BJ (cell line): ENCODE measurements at regions of chr12 and their contacts with region 1.

Region 1: GRCh38 chr12:48988030-48988649 is 10.0 kb downstream of the WNT1 start:
- DNase-seq: no peak
- H3K4me3 ChIP-seq: no peak overlapping the region
- H3K27me3 ChIP-seq: peaks cover 37% of the 10 kb centered on the region
- CTCF ChIP-seq: peak; percentile 90

Region 2: GRCh38 chr12:48739618-48740273 is 248.4 kb before region 1 on chr12:
- CTCF ChIA-PET with region 1: no interaction called
- POLR2A ChIA-PET with region 1: no interaction called
- DNase-seq: no peak
- H3K4me3 ChIP-seq: no peak overlapping the region
- H3K27me3 ChIP-seq: no peaks in the 10 kb centered on the region
- CTCF ChIP-seq: no peak

Region 3: DNA sequence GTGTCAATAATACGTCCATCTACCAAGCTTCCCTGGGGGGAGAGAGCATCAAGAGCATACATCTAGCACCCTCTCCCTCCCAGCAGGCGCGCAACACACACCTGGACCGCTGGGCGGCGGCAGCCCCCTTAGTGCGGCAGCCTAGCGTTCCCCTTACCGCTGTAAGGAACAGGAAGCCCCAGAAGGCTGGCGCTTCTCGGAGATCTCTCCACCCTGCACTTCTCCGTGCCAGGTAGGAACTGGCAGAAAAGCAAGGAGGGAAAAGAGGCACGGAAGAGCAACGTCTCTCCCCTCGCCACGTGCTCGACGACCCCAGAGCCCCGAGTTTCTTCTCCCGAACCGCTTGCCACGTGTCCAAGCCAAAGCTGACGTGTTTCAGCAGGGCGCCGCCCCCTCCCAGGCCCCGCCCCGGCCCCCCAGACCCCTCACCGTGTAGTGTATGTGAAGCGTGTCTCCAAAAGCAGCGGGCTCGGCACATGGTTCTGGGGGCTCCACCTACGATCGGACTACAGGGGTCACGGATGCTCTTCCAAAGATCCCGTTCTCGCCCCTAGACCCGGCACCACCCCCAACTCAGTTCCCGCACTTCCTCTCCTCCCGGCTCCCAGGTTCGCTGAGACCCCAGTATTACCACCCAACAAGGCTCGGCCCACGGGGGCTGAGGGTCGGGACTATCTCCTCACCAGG is 63.4 kb before region 1 on chr12:
- CTCF ChIA-PET with region 1: interaction called, 16 read pairs
- POLR2A ChIA-PET with region 1: no interaction called
- DNase-seq: no peak
- H3K4me3 ChIP-seq: peak overlapping the region; percentile 80
- H3K27me3 ChIP-seq: no peaks in the 10 kb centered on the region
- CTCF ChIP-seq: peak; percentile 70

Region 4: DNA sequence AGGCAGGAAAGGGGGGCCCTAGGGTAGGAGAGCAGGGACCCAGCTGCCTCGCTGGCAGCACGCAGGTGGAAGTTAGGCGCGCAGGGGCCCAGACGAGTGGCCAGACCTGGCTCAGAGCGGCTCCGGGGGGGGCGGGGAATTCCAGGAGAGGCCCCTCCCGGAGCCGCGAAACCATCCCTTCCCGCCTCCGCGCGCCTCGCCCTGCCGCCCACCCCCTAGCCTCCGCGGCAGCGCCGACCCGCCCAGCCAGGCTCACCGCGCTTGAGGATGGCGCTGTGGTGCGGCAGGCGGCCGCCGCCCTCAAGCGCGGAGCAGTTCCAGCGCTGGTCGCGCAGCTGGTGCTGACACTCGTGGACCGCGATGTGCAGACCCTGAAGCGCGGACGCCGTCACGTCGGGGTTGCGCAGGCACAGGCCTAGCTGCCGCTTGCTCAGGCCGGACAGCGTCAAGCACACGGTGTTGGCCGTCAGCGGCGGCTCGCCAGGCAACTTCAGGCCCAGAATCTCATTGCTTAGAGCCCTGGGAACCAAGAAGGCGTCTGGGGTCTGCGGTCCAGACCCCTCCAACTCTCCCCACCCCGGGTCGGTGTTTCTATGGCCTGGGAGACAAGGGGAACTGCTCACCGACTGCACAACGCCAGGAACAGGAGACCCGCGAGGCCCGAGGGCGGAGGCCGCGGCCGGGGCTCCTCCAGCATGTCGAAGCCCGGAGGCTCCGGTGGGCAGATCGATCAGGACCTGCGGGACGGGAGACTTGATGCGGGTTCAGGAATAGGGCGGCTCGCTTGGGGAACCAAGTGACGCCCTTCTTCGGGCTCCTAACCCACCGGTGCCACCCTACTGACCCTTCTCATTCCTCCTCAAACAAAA is 18.1 kb before region 1 on chr12:
- CTCF ChIA-PET with region 1: interaction called, 757 read pairs
- POLR2A ChIA-PET with region 1: interaction called, 12 read pairs
- DNase-seq: no peak
- H3K4me3 ChIP-seq: no peak overlapping the region
- H3K27me3 ChIP-seq: peaks cover 14% of the 10 kb centered on the region
- CTCF ChIP-seq: no peak

Region 5: DNA sequence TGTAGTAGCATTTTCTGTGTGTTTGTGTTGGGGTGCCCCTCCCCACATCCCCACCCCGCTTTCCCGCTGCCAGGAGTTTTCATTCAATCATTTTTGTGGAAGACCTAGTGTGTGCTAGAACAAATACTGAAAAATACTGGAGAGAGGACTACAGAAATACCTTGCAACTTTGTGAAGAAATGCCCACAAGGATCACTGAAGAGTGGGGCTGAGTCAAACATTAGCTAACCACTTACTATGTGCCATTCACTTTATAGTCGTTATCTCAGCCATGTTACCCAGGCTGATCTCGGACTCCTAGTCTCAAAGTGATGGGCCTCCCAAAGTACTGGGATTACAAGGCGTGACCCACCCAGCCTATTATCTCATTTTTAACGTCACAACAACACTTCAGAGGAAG is 123.1 kb after region 1 on chr12:
- CTCF ChIA-PET with region 1: no interaction called
- POLR2A ChIA-PET with region 1: no interaction called
- DNase-seq: no peak
- H3K4me3 ChIP-seq: peak overlapping the region; percentile 25
- H3K27me3 ChIP-seq: no peaks in the 10 kb centered on the region
- CTCF ChIP-seq: no peak